Activated naive CD4-positive, alpha-beta T cell treated with anti-CD3 and anti-CD28 coated beads for 36 hours (primary cell): ENCODE measurements at regions of chr9 and their contacts with region 1.

Region 1: GRCh38 chr9:105053209-105053652 is 125.3 kb upstream of the ABCA1 start:
- DNase-seq: peak; percentile 89
- H3K4me3 Mint-ChIP-seq: no peak overlapping the region
- H3K27ac Mint-ChIP-seq: peak overlapping the region; percentile 88
- H3K4me1 Mint-ChIP-seq: peaks cover 42% of the 10 kb centered on the region
- H3K27me3 Mint-ChIP-seq: no peaks in the 10 kb centered on the region

Region 2: DNA sequence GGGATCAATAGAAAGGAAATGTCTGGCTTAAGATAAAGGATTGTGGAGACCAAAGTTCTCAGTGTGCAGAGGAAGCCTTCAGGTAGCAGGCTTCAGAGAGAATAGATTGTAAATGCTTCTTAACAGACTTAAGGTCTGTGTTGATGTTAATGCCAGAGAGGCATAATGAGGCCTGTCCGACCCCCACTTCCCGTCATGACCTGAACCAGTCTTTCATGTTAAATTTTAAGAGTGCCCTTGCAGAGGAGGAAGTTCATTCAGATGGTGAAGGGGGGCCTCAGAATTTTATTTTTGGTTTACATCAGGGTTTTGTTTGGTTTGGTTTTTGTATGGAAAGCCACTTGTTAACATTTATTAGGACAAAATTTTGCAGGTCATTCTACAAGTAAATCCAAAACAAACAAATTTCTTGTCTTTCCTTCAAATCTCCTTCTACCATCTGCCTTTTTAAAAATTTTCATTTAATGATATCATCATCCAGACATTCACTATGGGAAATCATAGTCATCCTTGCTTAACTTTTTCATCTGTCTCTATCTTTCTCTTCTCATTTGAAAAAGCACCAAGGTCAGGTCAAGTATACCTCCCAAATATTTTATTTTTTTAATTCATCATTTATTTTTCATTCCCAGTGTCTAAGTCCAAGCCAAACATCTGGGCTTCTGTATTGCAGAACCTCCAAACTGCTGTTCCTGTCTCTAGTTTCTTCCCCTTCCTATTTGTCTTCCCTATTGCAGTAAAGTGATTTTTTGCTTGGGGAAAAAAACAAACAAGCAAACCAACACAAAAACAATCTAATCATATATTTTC is 118.3 kb before region 1 on chr9:
- CTCF ChIA-PET with region 1: no interaction called
- intact Hi-C with region 1: no loop called
- DNase-seq: no peak
- H3K4me3 Mint-ChIP-seq: no peak overlapping the region
- H3K27ac Mint-ChIP-seq: no peak overlapping the region
- H3K4me1 Mint-ChIP-seq: peaks cover 11% of the 10 kb centered on the region
- H3K27me3 Mint-ChIP-seq: peaks cover 2% of the 10 kb centered on the region

Region 3: GRCh38 chr9:104961238-104961637 is 92.0 kb before region 1 on chr9:
- CTCF ChIA-PET with region 1: no interaction called
- intact Hi-C with region 1: loop called (anchors 1 kb)
- DNase-seq: peak; percentile 92
- H3K4me3 Mint-ChIP-seq: peak overlapping the region; percentile 62
- H3K27ac Mint-ChIP-seq: peak overlapping the region; percentile 96
- H3K4me1 Mint-ChIP-seq: peaks cover 39% of the 10 kb centered on the region
- H3K27me3 Mint-ChIP-seq: no peaks in the 10 kb centered on the region

Region 4: GRCh38 chr9:105007143-105007542 is 46.1 kb before region 1 on chr9:
- CTCF ChIA-PET with region 1: no interaction called
- intact Hi-C with region 1: loop called (anchors 2 kb)
- DNase-seq: peak; percentile 54
- H3K4me3 Mint-ChIP-seq: no peak overlapping the region
- H3K27ac Mint-ChIP-seq: no peak overlapping the region
- H3K4me1 Mint-ChIP-seq: peaks cover 7% of the 10 kb centered on the region
- H3K27me3 Mint-ChIP-seq: no peaks in the 10 kb centered on the region

Region 5: GRCh38 chr9:105069696-105070095 is 16.5 kb after region 1 on chr9:
- CTCF ChIA-PET with region 1: interaction called, 3 read pairs
- intact Hi-C with region 1: loop called (anchors 2 kb)
- DNase-seq: no peak
- H3K4me3 Mint-ChIP-seq: no peak overlapping the region
- H3K27ac Mint-ChIP-seq: no peak overlapping the region
- H3K4me1 Mint-ChIP-seq: peaks cover 11% of the 10 kb centered on the region
- H3K27me3 Mint-ChIP-seq: no peaks in the 10 kb centered on the region

Region 6: GRCh38 chr9:105127863-105128220 is 74.6 kb after region 1 on chr9:
- CTCF ChIA-PET with region 1: interaction called, 3 read pairs
- intact Hi-C with region 1: loop called (anchors 1 kb)
- DNase-seq: peak; percentile 74
- H3K4me3 Mint-ChIP-seq: no peak overlapping the region
- H3K27ac Mint-ChIP-seq: peak overlapping the region; percentile 28
- H3K4me1 Mint-ChIP-seq: peaks cover 44% of the 10 kb centered on the region
- H3K27me3 Mint-ChIP-seq: no peaks in the 10 kb centered on the region

Region 7: GRCh38 chr9:105541838-105542237 is 488.6 kb after region 1 on chr9:
- CTCF ChIA-PET with region 1: no interaction called
- intact Hi-C with region 1: loop called (anchors 2 kb)
- DNase-seq: no peak
- H3K4me3 Mint-ChIP-seq: no peak overlapping the region
- H3K27ac Mint-ChIP-seq: no peak overlapping the region
- H3K4me1 Mint-ChIP-seq: peaks cover 9% of the 10 kb centered on the region
- H3K27me3 Mint-ChIP-seq: peaks cover 7% of the 10 kb centered on the region